ENCODE measurements at regions of chr12 and their contacts with region 1.

Region 1: DNA sequence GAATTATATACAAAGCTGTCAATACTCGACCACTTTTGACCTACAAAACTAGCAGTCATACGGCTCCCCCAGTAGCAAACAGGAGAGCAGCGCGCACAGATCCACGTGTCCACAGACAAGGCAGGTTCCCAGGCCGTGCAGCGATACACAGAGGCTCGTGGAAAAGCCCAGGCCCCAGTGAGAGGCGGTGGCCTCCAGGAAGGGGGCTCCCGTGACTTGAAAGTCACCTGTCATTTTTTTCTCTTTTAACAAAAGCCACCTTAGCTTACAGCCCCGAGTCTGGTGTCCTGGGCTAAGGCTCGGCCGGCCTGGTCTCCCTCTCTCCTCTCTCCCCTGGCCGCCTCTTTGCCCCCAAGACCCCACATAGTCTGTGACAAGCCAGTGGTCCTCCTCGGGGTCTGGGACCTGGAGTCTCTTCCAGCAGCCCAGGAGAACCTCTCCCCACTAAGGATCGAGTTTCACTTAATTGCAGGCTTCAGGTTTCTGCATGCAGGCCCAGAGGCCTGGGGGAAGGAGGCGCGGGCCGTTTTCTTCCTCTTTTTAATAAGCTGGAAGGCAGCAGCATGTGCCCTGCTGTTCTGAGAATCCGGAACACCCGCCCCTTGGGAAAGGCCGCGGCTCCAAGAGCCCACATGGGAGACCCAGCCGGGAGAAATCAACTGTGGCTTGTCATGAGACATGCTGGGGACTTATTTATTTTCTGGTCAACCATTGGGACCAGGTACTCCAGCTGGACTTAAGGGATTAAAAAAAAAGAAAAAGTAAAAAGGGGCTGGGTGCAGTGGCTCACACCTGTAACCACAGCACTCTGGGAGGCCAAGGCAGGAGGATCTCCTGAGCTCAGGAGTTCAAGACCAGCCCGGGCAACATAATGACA is 15.9 kb downstream of the NCOR2 start:
- DNase-seq: peak in 3 of 5 donors; percentile 47 to 72 (median 63)
- H3K4me3 ChIP-seq: no peak overlapping the region
- H3K27ac ChIP-seq: peak overlapping the region in 1 of 2 donors; percentile 49
- H3K4me1 ChIP-seq: peaks cover 49% of the 10 kb centered on the region
- H3K27me3 ChIP-seq: no peaks in the 10 kb centered on the region
- CTCF ChIP-seq: no peak
- EP300 ChIP-seq: no peak
- POLR2A ChIP-seq: no peak

Region 2: GRCh38 chr12:124518051-124518932 is 33.2 kb before region 1 on chr12:
- intact Hi-C with region 1: loop called in 1 of 4 experiments (anchors 5 kb)
- DNase-seq: peak; percentile 99 to 100 (median 100)
- H3K4me3 ChIP-seq: peak overlapping the region; percentile 34
- H3K27ac ChIP-seq: peak overlapping the region; percentile 78 to 99
- H3K4me1 ChIP-seq: peaks cover 38% of the 10 kb centered on the region
- H3K27me3 ChIP-seq: no peaks in the 10 kb centered on the region
- CTCF ChIP-seq: no peak
- EP300 ChIP-seq: no peak
- POLR2A ChIP-seq: peak; percentile 39